ENCODE measurements at regions of chr17 and their contacts with region 1.

Region 1: DNA sequence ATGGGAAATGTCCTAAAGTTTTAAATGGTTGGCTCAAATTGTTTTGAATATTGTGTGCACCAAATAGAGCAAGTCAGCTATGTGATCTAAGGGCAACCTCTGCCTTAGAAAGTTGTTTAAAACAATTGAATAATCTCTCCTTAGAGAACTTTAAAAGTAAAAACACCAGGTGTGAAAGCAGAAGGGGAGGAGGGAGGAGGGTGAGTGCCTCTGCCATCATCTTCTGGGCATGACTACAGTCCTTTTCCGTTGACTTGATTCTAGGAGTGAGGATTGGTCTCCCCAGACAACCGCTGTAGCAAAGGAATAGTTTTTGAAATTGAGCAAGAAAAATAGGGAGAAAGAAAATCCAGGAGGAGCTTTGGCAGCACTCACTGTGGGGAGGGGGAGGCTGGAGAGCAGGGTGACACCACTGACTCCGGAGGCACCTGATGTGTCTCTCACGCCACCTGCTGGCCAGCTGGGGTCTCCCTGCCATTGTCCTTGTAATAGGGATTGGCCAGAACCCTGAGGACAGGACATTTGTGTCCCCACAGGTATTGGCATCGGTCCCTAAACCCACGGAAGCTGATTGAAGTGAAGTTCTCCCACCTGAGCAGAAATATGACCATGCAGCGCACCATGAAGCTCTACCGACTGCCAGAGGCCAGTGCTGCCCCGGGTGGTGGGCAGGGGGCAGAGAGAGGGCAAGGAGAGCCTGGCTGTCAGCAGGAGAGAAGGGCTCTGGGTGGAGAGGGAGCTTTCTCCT is 33.3 kb downstream of the PLCD3 start:
- DNase-seq: peak; percentile 54 to 76 (median 71)
- H3K4me3 ChIP-seq: no peak overlapping the region
- H3K27ac ChIP-seq: no peak overlapping the region
- H3K4me1 ChIP-seq: no peaks in the 10 kb centered on the region
- H3K27me3 ChIP-seq: no peaks in the 10 kb centered on the region

Region 2: DNA sequence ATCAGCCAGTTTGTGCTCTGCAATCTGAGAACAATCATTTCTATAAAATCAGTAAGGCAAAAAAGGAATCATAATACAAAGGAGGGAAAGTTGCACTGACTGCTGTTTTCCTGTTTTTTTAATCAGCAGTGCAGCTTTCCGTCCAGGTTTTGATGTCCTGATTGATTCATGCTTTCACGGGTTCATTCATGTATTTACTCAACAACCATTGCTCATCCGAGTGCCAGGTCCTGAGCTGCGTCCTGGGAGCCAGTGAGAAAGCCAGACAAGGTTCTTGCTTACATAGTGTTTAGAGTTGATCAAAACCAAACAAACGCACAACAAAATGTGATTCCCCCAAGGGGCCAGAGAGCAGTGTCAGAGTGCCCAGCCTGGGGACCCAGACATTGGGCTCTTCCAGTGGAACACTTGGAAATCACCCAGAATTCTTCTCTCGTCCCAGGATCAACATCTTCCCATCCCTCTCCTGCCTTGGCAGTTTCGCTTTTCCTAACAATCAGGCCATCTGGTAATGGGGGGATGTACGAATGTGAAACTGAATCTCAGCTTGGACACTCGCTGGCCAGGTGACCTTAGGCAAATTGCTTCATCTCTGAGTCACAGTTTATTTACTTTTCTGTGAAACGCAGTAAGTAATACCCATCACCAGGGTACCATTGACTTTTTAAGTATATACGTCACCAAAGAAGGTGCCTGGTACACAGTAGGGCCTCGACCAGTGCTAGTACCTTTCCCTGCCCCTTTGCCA is 117.6 kb before region 1 on chr17:
- CTCF ChIA-PET with region 1: no interaction called
- POLR2A ChIA-PET with region 1: no interaction called
- DNase-seq: no peak
- H3K4me3 ChIP-seq: no peak overlapping the region
- H3K27ac ChIP-seq: no peak overlapping the region
- H3K4me1 ChIP-seq: no peaks in the 10 kb centered on the region
- H3K27me3 ChIP-seq: peaks cover under 1 to 78% (median 31%) of the 10 kb centered on the region in 5 experiments

Region 3: DNA sequence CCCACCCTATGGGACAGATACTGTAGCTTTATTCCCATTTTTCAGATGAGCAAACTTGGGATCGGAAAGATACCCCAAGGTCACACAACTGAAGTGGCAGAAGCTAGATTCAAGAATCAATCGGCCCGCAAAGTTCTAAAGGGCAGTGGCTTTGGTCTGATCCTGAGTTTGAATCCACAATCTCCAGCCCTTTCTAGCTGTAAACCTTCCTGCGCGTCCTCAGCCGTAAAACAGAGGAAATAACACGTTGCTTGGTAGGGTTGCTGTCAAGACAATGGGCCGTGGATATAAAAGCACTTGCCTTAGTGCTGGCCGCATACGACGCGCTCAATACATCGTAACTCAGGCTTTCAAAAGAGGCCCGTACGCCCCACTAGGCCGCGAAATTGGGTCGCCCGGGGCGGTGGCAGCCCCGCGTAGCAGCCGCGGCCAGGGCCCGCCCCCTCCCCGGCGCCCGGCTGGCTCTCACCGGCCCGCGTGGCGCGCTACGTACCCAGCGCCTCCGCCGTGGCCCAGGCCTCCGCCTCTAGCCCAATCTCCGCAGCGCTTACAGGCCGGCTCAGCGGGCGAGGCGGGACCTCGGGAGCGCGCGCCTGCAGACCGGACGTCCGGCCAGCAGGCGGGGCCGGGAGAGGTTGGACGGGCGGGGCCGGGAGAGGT is 47.9 kb before region 1 on chr17 and contains the start of gene DCAKD:
- CTCF ChIA-PET with region 1: interaction called, 10 read pairs
- POLR2A ChIA-PET with region 1: no interaction called
- DNase-seq: peak; percentile 93 to 97 (median 96)
- H3K4me3 ChIP-seq: peak within 1 kb of the TSS; percentile 48 to 91 (median 86)
- H3K27ac ChIP-seq: peak within 1 kb of the TSS; percentile 89 to 92
- H3K4me1 ChIP-seq: peaks cover 5 to 16% (median 15%) of the 10 kb centered on the region in 4 experiments
- H3K27me3 ChIP-seq: no peaks in the 10 kb centered on the region

Region 4: GRCh38 chr17:45115871-45116724 is 17.1 kb after region 1 on chr17:
- CTCF ChIA-PET with region 1: interaction called, 16 read pairs
- POLR2A ChIA-PET with region 1: no interaction called
- DNase-seq: no peak
- H3K4me3 ChIP-seq: no peak overlapping the region
- H3K27ac ChIP-seq: no peak overlapping the region
- H3K4me1 ChIP-seq: peaks cover 0 to 3% (median 1%) of the 10 kb centered on the region in 4 experiments
- H3K27me3 ChIP-seq: peaks cover 0 to 20% (median 6%) of the 10 kb centered on the region in 5 experiments

Region 5: GRCh38 chr17:45247429-45248131 is 148.5 kb after region 1 on chr17:
- CTCF ChIA-PET with region 1: no interaction called
- POLR2A ChIA-PET with region 1: no interaction called
- DNase-seq: peak; percentile 86 to 92 (median 89)
- H3K4me3 ChIP-seq: peak overlapping the region; percentile 36 to 75 (median 66)
- H3K27ac ChIP-seq: peak overlapping the region in 1 of 2 experiments; percentile 74
- H3K4me1 ChIP-seq: peaks cover 0 to 30% (median 25%) of the 10 kb centered on the region in 4 experiments
- H3K27me3 ChIP-seq: no peaks in the 10 kb centered on the region

Measured in common myeloid progenitor, CD34-positive (primary cell).